ENCODE measurements at regions of chr6 and their contacts with region 1.

Region 1: DNA sequence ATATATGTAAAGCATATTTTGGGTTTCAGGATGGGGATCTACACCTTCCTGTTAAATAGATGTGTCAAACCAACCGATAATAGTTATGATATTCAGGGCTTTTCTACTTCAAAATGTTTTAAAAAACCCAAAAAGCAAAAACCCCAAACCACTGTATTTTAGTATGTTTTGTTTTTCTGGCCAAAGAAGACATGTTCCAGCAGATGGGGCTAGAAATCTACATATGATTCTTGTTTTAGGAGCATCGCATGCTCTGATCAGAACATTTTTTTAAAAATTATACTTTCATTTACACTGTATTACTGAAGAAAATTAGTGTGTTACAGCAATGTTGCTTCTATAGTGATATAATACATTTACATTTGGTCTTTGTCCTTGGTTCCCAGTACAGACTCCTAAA is 11.0 kb downstream of the RMND1 start:
- DNase-seq: no peak
- ATAC-seq: no peak
- H3K4me3 ChIP-seq: no peak overlapping the region
- H3K27ac ChIP-seq: no peak overlapping the region
- H3K4me1 ChIP-seq: peaks cover 4% of the 10 kb centered on the region
- H3K27me3 ChIP-seq: no peaks in the 10 kb centered on the region

Region 2: DNA sequence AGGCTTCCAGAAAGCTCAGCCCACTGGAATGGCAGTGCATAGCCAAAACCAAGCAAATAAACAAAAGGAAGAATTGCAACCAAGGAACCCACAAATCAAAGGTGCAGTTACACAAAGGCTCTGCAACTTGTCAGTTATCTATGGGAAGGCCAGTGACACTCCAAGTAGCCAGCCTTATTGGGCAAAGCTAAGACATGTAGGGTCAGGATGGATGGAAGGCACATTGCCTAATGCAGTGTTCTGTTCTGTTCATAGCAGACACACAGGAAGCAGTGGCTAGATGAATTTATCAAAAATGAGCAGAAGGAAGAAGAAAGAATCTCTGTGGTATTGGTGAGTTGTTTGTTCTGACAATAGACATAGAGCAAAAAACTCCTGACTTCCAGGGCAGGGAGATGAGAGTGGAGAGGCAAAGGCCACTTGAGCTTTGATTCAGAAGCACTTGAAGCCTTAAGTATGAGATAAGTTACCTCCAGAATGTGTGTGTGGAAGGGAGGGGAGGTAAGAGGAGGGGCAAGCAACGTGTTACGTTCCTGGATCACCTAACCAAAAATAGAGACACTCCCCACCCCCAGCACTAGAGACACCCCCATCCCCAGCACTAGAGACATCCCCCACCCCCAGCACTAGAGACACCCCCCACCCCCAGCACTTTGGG is 259.1 kb before region 1 on chr6:
- intact Hi-C with region 1: no loop called
- DNase-seq: no peak
- ATAC-seq: no peak
- H3K4me3 ChIP-seq: no peak overlapping the region
- H3K27ac ChIP-seq: no peak overlapping the region
- H3K4me1 ChIP-seq: peaks cover 3% of the 10 kb centered on the region
- H3K27me3 ChIP-seq: no peaks in the 10 kb centered on the region

Region 3: DNA sequence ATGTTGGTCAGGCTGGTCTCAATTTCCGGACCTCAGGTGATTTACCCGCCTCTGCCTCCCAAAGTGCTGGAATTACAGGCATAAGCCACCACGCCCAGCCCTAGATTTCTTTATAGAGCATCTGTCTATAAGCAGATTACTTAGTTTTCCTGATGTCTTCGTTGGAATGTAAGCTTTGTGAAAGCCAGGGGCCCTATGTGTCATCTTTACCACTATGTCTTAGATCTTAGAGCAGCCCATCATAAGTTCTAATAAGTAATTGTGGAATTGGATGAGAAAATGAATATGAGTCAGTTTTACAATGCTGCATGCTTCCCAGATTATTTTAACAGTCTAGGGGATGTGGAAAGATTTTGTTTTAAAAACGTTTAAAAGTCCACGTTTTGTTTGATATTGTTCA is 40.5 kb before region 1 on chr6:
- intact Hi-C with region 1: loop called in 1 of 4 experiments (anchors 5 kb)
- DNase-seq: no peak
- ATAC-seq: no peak
- H3K4me3 ChIP-seq: no peak overlapping the region
- H3K27ac ChIP-seq: no peak overlapping the region
- H3K4me1 ChIP-seq: peaks cover 2% of the 10 kb centered on the region
- H3K27me3 ChIP-seq: no peaks in the 10 kb centered on the region